WTC11 (cell line): ENCODE measurements at regions of chr7 and their contacts with region 1.

Region 1: GRCh38 chr7:131859147-131859821 is 302.9 kb upstream of the PODXL start:
- DNase-seq: peak; percentile 83
- ATAC-seq: peak; percentile 98
- H3K4me3 Mint-ChIP-seq: no peak overlapping the region
- H3K27ac Mint-ChIP-seq: no peak overlapping the region
- H3K4me1 Mint-ChIP-seq: peaks cover 6% of the 10 kb centered on the region; the same call in 1 of the 2 replicates
- H3K27me3 Mint-ChIP-seq: peaks cover 6% of the 10 kb centered on the region
- CTCF ChIP-seq: peak; percentile 79

Region 2: DNA sequence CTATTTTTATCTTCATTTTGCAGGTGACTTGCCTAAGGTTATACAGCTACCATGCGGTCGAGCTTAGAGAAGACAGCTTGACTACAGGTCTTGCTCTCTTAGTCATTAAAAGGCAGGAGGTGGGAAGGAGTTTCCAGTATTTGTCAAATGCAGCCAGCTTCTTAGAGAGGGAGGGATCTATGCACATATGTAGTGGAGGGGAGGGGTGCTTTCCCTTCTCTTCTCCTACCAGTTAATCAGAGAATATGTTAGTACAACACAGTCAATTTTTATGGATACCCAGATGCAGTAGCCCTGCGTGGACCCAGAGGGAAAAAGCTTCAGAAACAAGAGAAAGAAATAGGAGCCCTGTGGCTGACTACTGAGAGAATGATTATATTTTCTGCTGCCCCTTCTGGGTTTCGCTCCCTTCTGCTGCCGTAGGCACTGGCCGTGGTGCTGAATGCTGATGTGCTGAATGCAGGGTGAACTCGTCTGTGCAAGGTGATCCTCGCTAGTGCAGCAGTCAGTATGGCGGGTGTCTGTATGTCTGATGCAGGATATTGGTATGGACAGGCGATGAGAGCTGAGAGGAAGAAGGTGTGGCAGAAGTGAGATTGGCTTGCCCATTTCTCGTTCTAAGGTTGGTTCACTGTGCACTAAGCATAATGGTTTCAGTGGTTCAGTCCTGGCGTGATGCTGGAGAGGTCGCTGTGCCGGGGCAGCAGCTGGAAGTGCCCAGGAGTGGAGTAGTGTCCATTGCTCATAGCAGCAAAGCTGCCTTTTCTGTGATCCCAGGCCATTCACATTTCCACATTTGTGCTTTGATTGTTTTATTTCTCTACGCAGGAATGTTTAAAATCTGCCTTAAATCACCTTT is 113.7 kb before region 1 on chr7:
- CTCF ChIA-PET with region 1: interaction called, 18 read pairs
- POLR2A ChIA-PET with region 1: no interaction called
- DNase-seq: peak; percentile 83
- ATAC-seq: peak; percentile 92
- H3K4me3 Mint-ChIP-seq: no peak overlapping the region
- H3K27ac Mint-ChIP-seq: peak overlapping the region; percentile 2; the same call in 1 of the 2 replicates
- H3K4me1 Mint-ChIP-seq: peaks cover 46% of the 10 kb centered on the region
- H3K27me3 Mint-ChIP-seq: no peaks in the 10 kb centered on the region; the same call in 1 of the 2 replicates
- CTCF ChIP-seq: no peak

Region 3: DNA sequence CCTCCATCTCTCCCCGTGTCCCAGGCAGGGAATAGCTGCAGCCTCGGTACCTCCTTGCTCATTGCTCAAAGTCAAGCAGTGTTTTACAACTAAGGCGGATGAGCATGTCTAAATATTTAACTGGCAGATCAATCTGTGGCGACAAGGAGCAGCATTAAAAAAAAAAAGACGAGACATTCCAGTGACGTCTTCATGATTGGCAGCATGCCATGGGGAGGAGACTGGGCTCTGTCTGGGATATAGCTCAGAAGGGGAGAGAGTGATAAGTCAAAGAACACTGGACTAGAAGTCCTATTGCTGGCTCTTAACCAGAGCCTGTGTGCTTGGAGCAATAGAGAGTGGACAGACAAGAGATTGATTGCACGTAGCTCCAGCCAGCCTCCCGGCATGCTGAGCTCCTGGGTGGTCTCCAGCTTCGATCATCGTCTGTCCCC is 15.4 kb before region 1 on chr7:
- CTCF ChIA-PET with region 1: interaction called, 36 read pairs
- POLR2A ChIA-PET with region 1: no interaction called
- DNase-seq: no peak
- ATAC-seq: no peak
- H3K4me3 Mint-ChIP-seq: no peak overlapping the region
- H3K27ac Mint-ChIP-seq: no peak overlapping the region
- H3K4me1 Mint-ChIP-seq: peaks cover 5% of the 10 kb centered on the region; the same call in 1 of the 2 replicates
- H3K27me3 Mint-ChIP-seq: peaks cover 3% of the 10 kb centered on the region; the same call in 1 of the 2 replicates
- CTCF ChIP-seq: no peak

Region 4: DNA sequence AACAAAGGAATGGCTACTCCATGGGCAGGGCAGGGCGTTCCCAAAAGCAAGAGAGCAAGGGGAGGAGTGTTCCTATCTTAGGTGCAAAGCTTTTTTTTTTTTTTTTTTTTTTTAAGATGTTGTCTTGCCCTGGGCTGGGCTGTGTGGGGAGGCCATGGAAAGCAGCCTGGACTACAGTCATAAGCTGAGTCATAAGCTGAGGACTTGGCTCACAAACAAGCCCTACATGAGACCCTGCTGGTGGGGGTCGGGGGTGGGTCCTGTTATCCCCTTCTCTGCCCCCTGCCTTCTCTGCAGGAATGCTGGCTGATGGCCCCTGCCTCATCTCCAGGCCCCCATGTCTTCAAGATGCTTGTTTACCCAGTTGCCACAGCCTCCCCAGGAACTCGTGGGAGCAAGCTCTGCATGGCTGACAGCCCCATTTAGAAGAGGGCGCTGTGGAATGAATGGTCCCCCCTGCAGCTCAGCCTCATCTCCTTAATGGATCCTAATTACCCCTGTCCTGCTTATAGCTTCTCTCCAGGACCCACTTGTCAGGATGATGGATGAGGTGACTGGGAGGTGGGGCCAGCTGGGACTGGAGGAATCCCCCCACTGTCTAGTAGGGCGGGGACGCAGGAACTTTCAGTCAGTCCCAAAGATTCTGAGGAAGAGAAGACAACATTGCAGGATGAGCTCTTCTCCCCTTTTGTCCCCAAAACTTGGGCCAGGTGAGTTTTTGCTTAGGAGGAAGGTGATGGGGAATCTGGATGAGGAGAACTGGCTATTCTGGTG is 37.9 kb after region 1 on chr7:
- CTCF ChIA-PET with region 1: interaction called, 14 read pairs
- POLR2A ChIA-PET with region 1: no interaction called
- DNase-seq: no peak
- ATAC-seq: peak; percentile 62
- H3K4me3 Mint-ChIP-seq: peak overlapping the region; percentile 25
- H3K27ac Mint-ChIP-seq: peak overlapping the region; percentile 89; the same call in 1 of the 2 replicates
- H3K4me1 Mint-ChIP-seq: peaks cover 31% of the 10 kb centered on the region
- H3K27me3 Mint-ChIP-seq: peaks cover 92% of the 10 kb centered on the region
- CTCF ChIP-seq: no peak

Region 5: GRCh38 chr7:131945313-131945911 is 86.1 kb after region 1 on chr7:
- CTCF ChIA-PET with region 1: interaction called, 46 read pairs
- POLR2A ChIA-PET with region 1: no interaction called
- DNase-seq: peak; percentile 86
- ATAC-seq: peak; percentile 93
- H3K4me3 Mint-ChIP-seq: no peak overlapping the region; the same call in 1 of the 2 replicates
- H3K27ac Mint-ChIP-seq: no peak overlapping the region
- H3K4me1 Mint-ChIP-seq: peaks cover 6% of the 10 kb centered on the region; the same call in 1 of the 2 replicates
- H3K27me3 Mint-ChIP-seq: peaks cover 32% of the 10 kb centered on the region
- CTCF ChIP-seq: peak; percentile 76

Region 6: GRCh38 chr7:132249614-132249972 is 390.3 kb after region 1 on chr7:
- CTCF ChIA-PET with region 1: interaction called, 14 read pairs
- POLR2A ChIA-PET with region 1: no interaction called
- DNase-seq: peak; percentile 51
- ATAC-seq: peak; percentile 93
- H3K4me3 Mint-ChIP-seq: no peak overlapping the region
- H3K27ac Mint-ChIP-seq: no peak overlapping the region
- H3K4me1 Mint-ChIP-seq: peaks cover 34% of the 10 kb centered on the region
- H3K27me3 Mint-ChIP-seq: peaks cover 2% of the 10 kb centered on the region; the same call in 1 of the 2 replicates
- CTCF ChIP-seq: no peak